ENCODE measurements at regions of chr19 and their contacts with region 1.

Region 1: GRCh38 chr19:13150187-13150930 is at the starts of genes IER2 and STX10:
- DNase-seq: peak; percentile 91
- ATAC-seq: peak; percentile 68
- H3K4me3 ChIP-seq: peak within 1 kb of the TSS; percentile 92 to 97 (median 96)
- H3K27ac ChIP-seq: peak within 1 kb of the TSS; percentile 94
- H3K4me1 ChIP-seq: peaks cover 29% of the 10 kb centered on the region
- H3K27me3 ChIP-seq: no peaks in the 10 kb centered on the region; a peak in 1 of 5 replicates
- CTCF ChIP-seq: peak; percentile 90
- EP300 ChIP-seq: peak in 1 of 2 experiments; percentile 36; a peak in 2 of 4 replicates
- POLR2A ChIP-seq: peak; percentile 62 to 64
- RAD21 ChIP-seq: peak; percentile 64
- total RNA-seq, gene IER2: 10.0 and 14.3 TPM in 2 replicates
- total RNA-seq, gene STX10: 36.8 and 47.9 TPM in 2 replicates

Region 2: DNA sequence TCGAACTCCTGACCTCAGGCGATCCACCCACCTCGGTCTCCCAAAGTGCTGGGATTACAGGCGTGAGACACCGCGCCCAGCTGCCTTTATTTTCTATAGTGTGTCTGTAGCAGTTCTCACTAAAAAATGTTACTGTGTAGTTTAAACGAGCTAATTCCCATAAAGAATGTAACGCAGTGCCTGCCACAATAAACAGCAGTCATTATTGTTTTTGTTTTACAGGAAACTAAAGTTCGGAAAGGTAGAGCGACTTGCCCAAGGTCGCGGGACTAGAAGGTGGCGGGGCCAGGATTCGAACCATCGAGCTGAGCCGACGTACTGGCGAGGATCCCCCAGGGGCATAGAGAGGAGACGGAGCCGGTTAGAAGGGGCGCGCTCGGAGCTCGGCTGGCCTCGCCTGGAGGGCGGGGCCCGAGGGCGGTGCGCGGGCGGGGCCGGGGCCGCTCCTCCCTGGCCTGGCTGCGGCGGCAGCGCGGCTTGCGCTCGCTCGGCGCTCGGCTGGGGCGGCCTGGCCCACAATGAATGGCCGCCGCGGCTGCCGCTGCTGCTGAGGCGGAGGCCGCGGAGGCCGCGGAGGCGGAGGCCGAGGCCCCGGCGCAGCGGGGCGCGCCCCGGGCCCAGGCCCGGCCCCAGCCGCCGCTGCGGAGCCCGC is 32.5 kb before region 1 on chr19 and contains the start of gene NACC1:
- CTCF ChIA-PET with region 1: no interaction called
- POLR2A ChIA-PET with region 1: interaction called, 20 read pairs
- in situ Hi-C with region 1: loop called (anchors 5 kb)
- intact Hi-C with region 1: loop called (anchors 5 kb)
- DNase-seq: peak; percentile 74
- ATAC-seq: peak; percentile 76
- H3K4me3 ChIP-seq: peak within 1 kb of the TSS; percentile 96 to 99 (median 99)
- H3K27ac ChIP-seq: peak within 1 kb of the TSS; percentile 91
- H3K4me1 ChIP-seq: peaks cover 42% of the 10 kb centered on the region
- H3K27me3 ChIP-seq: no peaks in the 10 kb centered on the region; a peak in 1 of 5 replicates
- CTCF ChIP-seq: 0 out of 2 replicates have a peak, but pooled peaks have one; percentile 8
- EP300 ChIP-seq: 0 out of 4 replicates have a peak, but pooled peaks of 1 of the 2 experiments have one; percentile 14
- POLR2A ChIP-seq: no peak
- RAD21 ChIP-seq: peak; percentile 7; the same call in 1 of the 2 replicates
- total RNA-seq, gene NACC1: 31.8 and 46.7 TPM in 2 replicates

Region 3: DNA sequence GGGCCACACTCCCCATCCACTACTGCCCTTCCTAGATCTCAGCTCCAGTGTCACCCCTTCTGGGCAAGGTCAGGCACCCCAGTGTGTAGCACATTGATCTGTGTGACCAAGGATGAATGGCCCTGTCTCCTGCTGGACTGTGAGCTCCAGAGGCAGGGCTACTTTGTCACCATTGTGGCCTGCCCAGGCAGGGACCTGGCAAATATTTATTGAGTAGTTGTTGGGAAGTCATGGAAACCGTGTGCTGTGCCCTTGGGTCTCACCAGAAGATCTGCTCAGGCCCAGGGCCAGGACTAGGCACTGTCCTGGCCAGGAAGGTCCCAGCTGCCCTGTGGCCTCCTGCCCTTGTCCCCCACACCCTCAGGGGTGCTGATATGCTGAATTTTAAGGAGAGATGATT is 21.8 kb before region 1 on chr19:
- CTCF ChIA-PET with region 1: no interaction called
- POLR2A ChIA-PET with region 1: interaction called, 13 read pairs
- in situ Hi-C with region 1: no loop called
- intact Hi-C with region 1: no loop called
- DNase-seq: peak; percentile 93
- ATAC-seq: peak; percentile 96
- H3K4me3 ChIP-seq: peak overlapping the region in 1 of 3 experiments; percentile 13; a peak in 2 of 6 replicates
- H3K27ac ChIP-seq: peak overlapping the region; percentile 96
- H3K4me1 ChIP-seq: peaks cover 38% of the 10 kb centered on the region
- H3K27me3 ChIP-seq: no peaks in the 10 kb centered on the region
- CTCF ChIP-seq: 0 out of 2 replicates have a peak, but pooled peaks have one; percentile 20
- EP300 ChIP-seq: peak; percentile 63 to 74; a peak in 2 of 4 replicates
- POLR2A ChIP-seq: peak in 1 of 2 experiments; percentile 78; a peak in 2 of 4 replicates
- RAD21 ChIP-seq: 0 out of 2 replicates have a peak, but pooled peaks have one; percentile 38

Region 4: DNA sequence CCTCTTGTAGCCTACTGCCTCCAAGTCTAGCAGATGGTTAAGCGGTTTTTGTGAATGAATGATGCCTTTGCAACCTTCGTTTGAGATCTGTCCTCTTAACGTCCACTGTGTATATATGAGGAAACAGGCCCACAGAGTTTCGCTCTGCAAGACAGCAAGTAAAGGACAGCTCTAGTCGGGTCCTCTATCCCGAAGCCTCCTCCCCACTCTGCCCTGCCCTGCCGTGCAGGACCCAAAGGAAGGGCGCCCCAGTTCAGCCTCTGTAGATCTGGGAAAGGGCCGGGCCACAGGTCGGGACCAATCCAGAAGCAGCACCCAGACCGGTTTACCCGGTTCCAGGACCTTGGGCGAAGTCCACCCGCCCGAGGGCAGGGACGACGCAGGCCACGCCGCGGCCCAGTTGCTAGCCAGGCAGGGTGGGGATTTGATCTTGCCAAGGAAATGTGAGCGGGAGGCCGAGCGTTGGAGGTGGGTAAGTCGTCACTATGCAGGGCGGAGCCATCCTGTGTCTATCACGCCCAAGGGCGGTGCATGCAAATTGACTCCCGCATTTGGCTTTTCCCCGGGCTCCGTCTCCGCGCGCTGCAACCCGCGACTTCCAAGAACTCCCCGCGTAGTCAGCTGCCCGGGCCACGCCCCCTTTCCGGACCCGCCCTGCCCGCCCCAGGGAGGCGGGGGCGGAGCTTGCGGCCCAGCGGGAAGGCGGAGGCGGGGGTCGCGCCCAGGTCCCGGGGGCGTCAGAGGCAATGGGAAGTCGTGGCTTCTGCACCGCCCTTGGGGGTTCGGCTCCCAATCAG is 12.4 kb after region 1 on chr19:
- CTCF ChIA-PET with region 1: no interaction called
- POLR2A ChIA-PET with region 1: interaction called, 108 read pairs
- in situ Hi-C with region 1: no loop called
- intact Hi-C with region 1: loop called (anchors 1 kb)
- DNase-seq: peak; percentile 98
- ATAC-seq: peak; percentile 84
- H3K4me3 ChIP-seq: peak overlapping the region; percentile 63 to 81 (median 64)
- H3K27ac ChIP-seq: peak overlapping the region; percentile 99
- H3K4me1 ChIP-seq: peaks cover 52% of the 10 kb centered on the region
- H3K27me3 ChIP-seq: no peaks in the 10 kb centered on the region
- CTCF ChIP-seq: 0 out of 2 replicates have a peak, but pooled peaks have one; percentile 26
- EP300 ChIP-seq: no peak; a peak in 1 of 4 replicates
- POLR2A ChIP-seq: peak; percentile 82 to 90
- RAD21 ChIP-seq: peak; percentile 38

Region 5: DNA sequence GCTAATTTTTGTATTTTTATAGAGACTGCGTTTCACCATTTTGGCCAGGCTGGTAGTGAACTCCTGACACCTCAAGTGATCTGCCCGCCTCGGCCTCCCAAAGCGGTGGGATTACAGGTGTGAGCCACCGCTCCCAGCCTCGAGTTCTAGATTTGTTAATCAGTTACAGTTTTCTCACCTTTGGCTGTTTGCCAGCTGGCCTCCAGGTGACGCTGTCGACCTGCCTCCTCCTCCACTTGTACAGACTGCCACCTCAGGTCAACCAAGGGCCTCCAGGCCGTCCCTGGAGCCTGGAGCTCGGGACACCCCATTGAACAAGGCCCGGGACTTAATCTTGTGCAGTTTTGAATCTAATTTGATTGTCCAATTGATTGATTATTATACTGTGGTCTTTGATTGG is 45.3 kb after region 1 on chr19:
- CTCF ChIA-PET with region 1: interaction called, 4 read pairs
- POLR2A ChIA-PET with region 1: interaction called, 8 read pairs
- in situ Hi-C with region 1: loop called (anchors 5 kb)
- intact Hi-C with region 1: loop called (anchors 1 kb)
- DNase-seq: peak; percentile 80
- ATAC-seq: peak; percentile 78
- H3K4me3 ChIP-seq: no peak overlapping the region
- H3K27ac ChIP-seq: no peak overlapping the region
- H3K4me1 ChIP-seq: peaks cover 38% of the 10 kb centered on the region
- H3K27me3 ChIP-seq: no peaks in the 10 kb centered on the region
- CTCF ChIP-seq: peak; percentile 88
- EP300 ChIP-seq: no peak
- POLR2A ChIP-seq: no peak
- RAD21 ChIP-seq: peak; percentile 51

Region 6: DNA sequence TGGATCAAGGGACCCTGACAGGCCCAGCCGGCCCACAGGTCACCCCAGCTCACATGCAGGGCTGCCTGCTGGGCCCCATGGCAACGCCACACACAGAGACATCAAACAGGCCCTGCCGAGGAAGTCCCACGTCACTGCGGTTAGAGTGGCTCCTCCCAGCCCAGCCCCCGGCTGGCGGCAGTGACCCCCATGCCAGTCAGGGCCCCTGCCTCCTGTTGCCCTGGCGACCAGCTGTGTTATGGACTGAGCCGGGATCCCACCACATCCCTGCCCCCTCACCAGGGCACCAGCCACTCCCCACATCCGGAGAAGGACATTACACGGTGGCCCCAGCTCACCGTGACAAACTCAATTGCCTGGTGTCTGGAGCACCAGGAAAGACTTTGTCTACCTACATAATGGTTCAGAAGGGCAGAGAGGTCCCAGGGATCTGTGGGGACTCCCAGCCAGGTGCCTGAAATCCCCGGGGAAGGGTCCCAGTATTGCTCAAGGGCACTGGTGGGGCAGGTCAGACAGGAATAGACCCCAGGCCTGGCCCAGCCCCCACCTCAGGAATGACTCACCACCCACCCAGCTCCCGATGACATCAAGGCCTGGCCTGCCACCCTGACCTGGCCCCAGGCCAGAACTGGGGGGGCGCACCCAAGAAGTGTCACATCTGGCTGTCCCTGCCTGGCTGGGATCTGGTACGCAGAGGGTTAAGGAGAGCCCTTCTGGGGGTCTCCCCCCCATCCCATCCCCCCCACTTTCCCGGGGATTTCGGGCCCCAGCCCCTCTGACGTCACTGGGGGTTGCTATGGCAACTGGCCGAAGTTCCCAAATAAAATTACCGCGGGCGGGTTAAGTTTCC is 696.4 kb after region 1 on chr19:
- CTCF ChIA-PET with region 1: no interaction called
- POLR2A ChIA-PET with region 1: no interaction called
- in situ Hi-C with region 1: no loop called
- intact Hi-C with region 1: loop called (anchors 5 kb)
- DNase-seq: peak; percentile 95
- ATAC-seq: peak; percentile 66
- H3K4me3 ChIP-seq: peak overlapping the region; percentile 53 to 70 (median 64); a peak in 5 of 6 replicates
- H3K27ac ChIP-seq: peak overlapping the region; percentile 99
- H3K4me1 ChIP-seq: peaks cover 84% of the 10 kb centered on the region
- H3K27me3 ChIP-seq: no peaks in the 10 kb centered on the region; a peak in 1 of 5 replicates
- CTCF ChIP-seq: no peak
- EP300 ChIP-seq: peak; percentile 75 to 91
- POLR2A ChIP-seq: peak; percentile 21 to 79; a peak in 2 of 4 replicates
- RAD21 ChIP-seq: no peak

Measured in HepG2 (cell line).